ENCODE measurements at regions of chr10 and their contacts with region 1.

Region 1: GRCh38 chr10:16867556-16867955 is 50.3 kb upstream of the RSU1 start:
- DNase-seq: no peak
- ATAC-seq: no peak
- H3K4me3 ChIP-seq: no peak overlapping the region
- H3K27ac ChIP-seq: no peak overlapping the region
- H3K4me1 ChIP-seq: no peaks in the 10 kb centered on the region
- H3K27me3 ChIP-seq: no peaks in the 10 kb centered on the region

Region 2: DNA sequence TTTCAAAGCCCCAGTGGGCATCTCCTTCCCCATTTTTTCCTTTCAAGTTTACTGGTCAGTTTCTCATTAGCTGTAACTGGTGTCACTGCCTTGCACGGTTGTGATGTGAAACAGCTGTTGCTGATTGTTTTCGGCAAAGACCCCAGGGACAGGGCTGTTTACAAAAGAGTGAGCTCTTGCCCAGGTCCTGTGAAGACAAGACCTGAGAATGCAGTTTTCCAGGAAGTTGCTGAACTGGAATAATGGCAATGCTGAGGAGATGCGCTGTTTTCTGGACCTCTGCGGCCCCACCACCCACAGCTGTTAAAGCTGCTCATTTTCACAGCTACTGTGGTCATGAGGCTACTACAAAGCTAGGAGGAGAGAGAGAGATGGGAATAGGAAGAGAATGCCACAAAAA is 66.2 kb after region 1 on chr10:
- intact Hi-C with region 1: loop called in 1 of 2 experiments (anchors 10 kb)
- DNase-seq: no peak
- ATAC-seq: no peak
- H3K4me3 ChIP-seq: no peak overlapping the region
- H3K27ac ChIP-seq: no peak overlapping the region
- H3K4me1 ChIP-seq: peaks cover 0 to 2% of the 10 kb centered on the region in 2 donors
- H3K27me3 ChIP-seq: no peaks in the 10 kb centered on the region